Posterior cingulate gyrus (tissue), 11 donors: ENCODE measurements at regions of chr17 and their contacts with region 1.

Region 1: GRCh38 chr17:81702971-81703746 is at the start of gene MRPL12:
- DNase-seq: peak; percentile 92 to 99 (median 96)

Region 2: GRCh38 chr17:81683584-81684237 is 19.4 kb before region 1 on chr17 and contains the starts of genes ARL16 and HGS:
- intact Hi-C with region 1: loop called (anchors 1 kb)
- DNase-seq: peak; percentile 95 to 99 (median 96)